Kidney (tissue), 22 donors: ENCODE measurements at regions of chr17 and their contacts with region 1.

Region 1: DNA sequence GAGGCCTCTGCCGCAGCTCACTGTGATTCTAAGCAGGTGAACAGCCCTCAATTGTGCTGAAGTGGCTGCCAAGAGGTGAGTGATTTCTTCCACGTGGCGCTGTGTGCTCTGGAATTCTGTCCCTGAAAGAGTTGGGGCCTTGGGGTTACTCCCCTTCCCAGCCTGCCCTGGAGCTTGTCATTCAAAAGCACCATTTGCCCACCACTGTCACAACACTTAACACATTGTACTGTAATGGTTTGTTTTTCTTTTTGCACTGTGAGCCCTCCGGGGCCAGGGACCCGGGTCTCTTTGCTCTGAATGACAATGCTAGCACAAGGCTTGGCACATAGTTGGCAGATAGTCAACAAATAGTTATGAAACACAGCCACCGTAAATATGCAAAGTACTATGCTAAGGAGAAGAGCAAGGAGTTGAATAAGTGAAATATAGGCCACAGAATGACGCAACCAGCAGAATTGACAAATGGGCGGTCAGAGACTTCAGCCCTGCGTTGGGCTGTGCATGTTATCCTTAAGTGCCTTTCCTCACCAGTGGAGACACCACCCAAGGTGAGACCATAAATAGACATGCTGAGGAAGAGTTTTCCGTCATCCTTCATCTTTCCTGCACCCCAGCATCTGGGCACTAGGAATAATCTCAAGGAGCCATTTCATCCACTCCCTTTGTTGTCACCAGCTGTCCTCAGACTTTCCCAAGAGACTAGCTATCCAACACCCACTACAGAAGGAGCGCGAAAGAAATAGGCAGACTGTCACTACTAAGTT is 112.0 kb upstream of the DNAH9 start:
- DNase-seq: no peak
- H3K4me3 ChIP-seq: no peak overlapping the region
- H3K27ac ChIP-seq: no peak overlapping the region
- H3K4me1 ChIP-seq: no peaks in the 10 kb centered on the region
- H3K27me3 ChIP-seq: no peaks in the 10 kb centered on the region
- CTCF ChIP-seq: no peak

Region 2: GRCh38 chr17:11539637-11540036 is 53.4 kb after region 1 on chr17:
- intact Hi-C with region 1: loop called (anchors 10 kb)
- DNase-seq: no peak
- H3K4me3 ChIP-seq: no peak overlapping the region
- H3K27ac ChIP-seq: no peak overlapping the region
- H3K4me1 ChIP-seq: no peaks in the 10 kb centered on the region
- H3K27me3 ChIP-seq: no peaks in the 10 kb centered on the region
- CTCF ChIP-seq: no peak